Colonic mucosa (tissue), 4 donors: ENCODE measurements at regions of chr12 and their contacts with region 1.

Region 1: DNA sequence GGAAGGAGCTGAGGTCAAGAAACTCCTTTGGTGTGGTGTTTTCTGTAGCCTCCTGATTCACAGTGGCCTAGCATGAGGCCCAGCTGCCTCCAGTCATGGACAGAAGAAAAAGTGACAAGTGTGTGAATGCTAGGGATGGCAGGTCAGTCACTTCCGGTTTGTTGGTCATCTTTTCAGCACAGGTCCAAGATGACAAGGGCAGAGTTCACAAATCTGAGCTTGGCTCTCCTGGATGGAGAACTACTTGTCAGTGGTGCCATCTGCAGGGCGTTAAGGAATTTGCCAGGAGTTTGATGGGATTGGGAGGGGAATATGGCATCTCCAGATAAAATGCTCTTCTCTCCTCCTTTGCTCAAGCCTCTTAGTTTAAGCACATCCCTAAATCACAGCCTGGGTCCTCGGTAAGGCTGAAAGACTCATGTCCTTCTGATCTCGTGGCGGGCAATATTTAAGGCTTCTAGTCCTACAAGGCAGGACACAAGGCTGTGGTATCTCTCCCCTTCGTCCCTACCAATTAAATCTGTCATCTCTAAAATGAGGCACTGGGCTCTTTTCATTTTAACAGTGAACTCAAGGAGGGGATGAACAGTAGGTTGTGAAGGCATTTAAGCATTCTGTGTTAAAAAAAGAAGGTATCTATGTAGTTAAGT is 10.0 kb downstream of the TUBA1B start:
- DNase-seq: peak; percentile 56
- H3K4me3 ChIP-seq: no peak overlapping the region
- H3K27ac ChIP-seq: no peak overlapping the region
- H3K4me1 ChIP-seq: no peaks in the 10 kb centered on the region
- H3K27me3 ChIP-seq: no peaks in the 10 kb centered on the region
- CTCF ChIP-seq: peak; percentile 44

Region 2: GRCh38 chr12:48814262-48815125 is 306.7 kb before region 1 on chr12:
- intact Hi-C with region 1: no loop called
- DNase-seq: peak; percentile 92
- H3K4me3 ChIP-seq: peak overlapping the region; percentile 60
- H3K27ac ChIP-seq: peak overlapping the region; percentile 89
- H3K4me1 ChIP-seq: peaks cover 8% of the 10 kb centered on the region
- H3K27me3 ChIP-seq: no peaks in the 10 kb centered on the region
- CTCF ChIP-seq: peak; percentile 99

Region 3: GRCh38 chr12:49069507-49070346 is 51.4 kb before region 1 on chr12 and contains the start of gene RHEBL1:
- intact Hi-C with region 1: loop called (anchors 10 kb)
- DNase-seq: peak; percentile 99
- H3K4me3 ChIP-seq: peak within 1 kb of the TSS; percentile 74
- H3K27ac ChIP-seq: peak within 1 kb of the TSS; percentile 54
- H3K4me1 ChIP-seq: peaks cover 8% of the 10 kb centered on the region
- H3K27me3 ChIP-seq: no peaks in the 10 kb centered on the region
- CTCF ChIP-seq: no peak
- total RNA-seq, gene RHEBL1: 0.27 to 0.32 TPM

Region 4: DNA sequence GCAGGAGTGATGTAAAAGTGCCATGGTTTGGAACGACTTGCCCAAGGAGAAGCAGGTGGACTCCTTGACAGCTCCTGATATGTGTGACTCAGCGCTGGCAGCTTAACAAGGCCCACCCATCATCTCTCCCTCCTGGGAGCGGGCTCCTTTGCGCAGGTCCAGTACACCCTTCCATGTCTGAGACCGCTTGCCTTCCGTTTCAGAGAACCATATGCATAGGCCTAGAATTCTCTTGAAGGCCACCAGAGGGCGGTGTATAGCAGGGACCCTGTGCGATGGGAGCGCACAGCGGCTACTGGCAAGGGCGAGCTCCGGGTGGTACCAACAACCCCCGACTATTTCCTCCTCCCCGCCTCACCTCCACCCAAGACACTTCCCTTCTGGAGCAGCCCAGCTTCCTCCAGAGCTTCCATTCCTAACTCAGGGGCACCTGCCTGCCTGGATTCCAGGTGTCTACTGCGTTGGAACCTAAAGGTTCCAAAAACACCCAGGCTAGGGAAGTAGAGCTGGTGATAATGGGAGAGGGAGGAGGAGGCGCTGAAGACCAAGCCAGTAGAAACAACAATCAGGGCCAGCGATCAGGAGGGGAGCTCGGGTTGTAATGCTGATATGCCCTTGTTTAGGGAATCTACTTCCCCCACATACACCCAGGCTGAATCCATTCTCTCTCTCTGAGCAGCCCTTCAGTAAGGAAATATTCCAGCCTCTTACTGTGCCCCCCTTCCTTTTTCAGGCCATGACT is 32.8 kb before region 1 on chr12:
- intact Hi-C with region 1: loop called (anchors 5 kb)
- DNase-seq: peak; percentile 81
- H3K4me3 ChIP-seq: no peak overlapping the region
- H3K27ac ChIP-seq: no peak overlapping the region
- H3K4me1 ChIP-seq: peaks cover 3% of the 10 kb centered on the region
- H3K27me3 ChIP-seq: peaks cover 45% of the 10 kb centered on the region
- CTCF ChIP-seq: peak; percentile 86